ENCODE measurements at regions of chr3 and their contacts with region 1.

Region 1: GRCh38 chr3:73056014-73056844 is 5.2 kb upstream of the EBLN2 start:
- DNase-seq: no peak
- ATAC-seq: peak in 1 of 2 donors; percentile 70
- H3K4me3 ChIP-seq: no peak overlapping the region
- H3K27ac ChIP-seq: no peak overlapping the region
- H3K4me1 ChIP-seq: peaks cover 8 to 13% of the 10 kb centered on the region in 2 donors
- H3K27me3 ChIP-seq: no peaks in the 10 kb centered on the region
- CTCF ChIP-seq: peak in 4 of 5 experiments; percentile 27 to 67 (median 56)
- POLR2A ChIP-seq: no peak

Region 2: DNA sequence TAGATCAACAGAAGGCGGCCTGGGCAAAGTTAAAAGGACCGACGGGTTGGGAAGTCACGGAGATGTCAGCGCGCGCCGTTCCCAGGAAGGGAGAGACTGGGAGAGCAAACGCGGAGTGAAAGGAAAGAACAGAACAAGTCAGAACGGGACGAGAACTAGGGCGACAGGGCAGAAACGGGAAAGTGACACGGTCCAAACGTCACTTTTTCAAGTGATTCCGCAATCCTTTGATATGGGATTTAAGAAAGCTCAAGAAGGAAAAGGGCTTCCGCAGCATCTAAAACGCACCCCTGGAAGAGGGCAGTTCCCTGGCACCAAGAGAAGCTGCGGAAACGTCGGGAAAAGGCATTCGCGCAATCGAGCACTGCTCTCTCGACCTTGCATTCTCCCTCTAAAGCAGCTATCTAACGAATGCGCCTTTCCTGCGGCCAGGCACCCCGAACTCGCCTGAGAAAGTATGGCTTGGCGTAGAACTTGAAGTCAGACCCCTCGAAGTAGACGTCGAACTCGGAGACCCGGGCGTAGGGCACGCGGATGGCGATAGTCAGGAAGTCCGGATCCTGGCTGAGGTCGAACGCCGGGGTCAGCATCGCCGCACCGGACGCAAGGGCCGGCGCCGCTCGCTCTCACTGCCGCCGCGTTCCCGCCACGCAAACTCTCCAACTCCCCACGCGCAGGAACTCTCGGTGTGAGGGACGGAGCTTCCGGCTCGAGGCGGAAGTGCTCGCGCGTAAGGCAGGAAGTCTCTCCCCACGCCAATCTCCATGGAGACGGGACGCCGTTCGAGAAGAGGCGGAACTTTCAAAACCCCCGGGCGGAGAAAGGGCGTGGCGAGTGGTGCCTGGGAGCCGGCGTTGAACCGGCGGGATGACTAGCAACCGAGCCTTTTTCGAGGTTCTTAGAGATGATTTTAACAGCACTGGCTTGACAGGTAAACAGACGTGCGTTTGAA is 208.2 kb before region 1 on chr3 and contains the start of gene SHQ1:
- in situ Hi-C with region 1: loop called in 3 of 4 experiments (anchors 25 kb)
- intact Hi-C with region 1: loop called (anchors 5 kb)
- DNase-seq: peak; percentile 92 to 93
- ATAC-seq: peak; percentile 99
- H3K4me3 ChIP-seq: peak within 1 kb of the TSS; percentile 81 to 100 (median 91)
- H3K27ac ChIP-seq: peak within 1 kb of the TSS; percentile 79 to 91 (median 82)
- H3K4me1 ChIP-seq: peaks cover 23 to 35% of the 10 kb centered on the region in 2 donors
- H3K27me3 ChIP-seq: no peaks in the 10 kb centered on the region
- CTCF ChIP-seq: no peak
- POLR2A ChIP-seq: peak; percentile 55 to 61
- total RNA-seq, gene SHQ1: 9.2 to 15.0 (median 12.6) TPM

Region 3: DNA sequence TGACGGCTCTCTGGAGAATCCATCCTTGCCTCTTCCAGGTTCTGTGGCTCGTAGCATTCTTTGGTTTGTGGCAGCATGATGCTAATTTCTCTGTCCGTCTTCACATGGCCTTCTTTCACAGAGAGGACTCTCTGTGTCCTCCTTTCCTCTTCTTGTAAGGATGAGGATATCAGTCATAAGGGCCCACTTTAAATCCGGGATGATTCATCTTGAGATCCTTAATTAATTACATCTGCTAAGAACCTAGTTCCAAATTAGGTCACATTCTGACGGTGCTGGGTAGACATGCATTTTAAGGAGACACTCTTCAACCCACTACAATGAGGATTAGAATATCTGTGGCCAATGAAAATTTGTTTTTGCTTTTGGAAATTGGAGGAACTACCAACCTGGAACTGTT is 184.0 kb before region 1 on chr3:
- in situ Hi-C with region 1: loop called in 1 of 4 experiments (anchors 25 kb)
- intact Hi-C with region 1: no loop called
- DNase-seq: no peak
- ATAC-seq: no peak
- H3K4me3 ChIP-seq: no peak overlapping the region
- H3K27ac ChIP-seq: no peak overlapping the region
- H3K4me1 ChIP-seq: no peaks in the 10 kb centered on the region
- H3K27me3 ChIP-seq: no peaks in the 10 kb centered on the region
- CTCF ChIP-seq: no peak
- POLR2A ChIP-seq: no peak

Region 4: DNA sequence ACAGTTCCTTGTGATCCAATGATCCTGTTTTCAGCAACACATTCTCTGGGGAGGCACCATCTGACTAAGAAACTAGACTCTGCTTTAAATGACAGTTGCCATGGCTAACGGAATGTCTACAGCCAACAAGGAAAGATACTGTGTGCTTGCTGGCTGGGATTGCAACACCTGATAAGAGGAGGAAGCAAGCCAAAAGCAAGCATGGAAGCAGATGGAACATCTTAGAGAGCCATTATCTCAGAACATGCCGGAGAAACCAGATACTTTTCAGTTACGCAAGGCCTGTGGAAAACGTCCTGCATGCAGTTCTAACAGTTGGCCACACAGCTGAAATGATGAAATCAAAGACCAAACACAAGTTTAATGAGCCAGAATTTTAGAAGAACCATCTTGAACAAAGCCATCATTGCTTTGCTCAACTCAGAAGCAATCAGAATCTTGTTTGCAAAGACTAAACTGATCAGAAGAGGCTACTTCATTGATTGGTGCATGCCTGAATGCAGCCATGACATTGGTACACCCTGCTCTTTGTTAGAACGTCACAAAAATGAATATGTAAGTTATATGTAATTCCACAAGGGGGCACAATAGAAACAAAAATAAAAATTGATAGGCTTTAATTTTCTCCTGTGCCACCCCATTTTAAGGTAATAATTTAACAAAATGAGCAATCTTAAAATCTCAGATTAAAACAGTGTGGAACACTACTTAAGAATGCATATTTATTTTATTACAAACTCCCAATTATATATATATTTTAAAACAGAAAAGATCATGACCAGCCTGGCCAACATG is 117.6 kb before region 1 on chr3:
- in situ Hi-C with region 1: loop called (anchors 5 to 25 kb)
- intact Hi-C with region 1: loop called (anchors 2 kb)
- DNase-seq: peak; percentile 79
- ATAC-seq: peak; percentile 99 to 100
- H3K4me3 ChIP-seq: no peak overlapping the region
- H3K27ac ChIP-seq: peak overlapping the region; percentile 35 to 73 (median 54)
- H3K4me1 ChIP-seq: peaks cover 10 to 11% of the 10 kb centered on the region in 2 donors
- H3K27me3 ChIP-seq: no peaks in the 10 kb centered on the region
- CTCF ChIP-seq: peak; percentile 59 to 95 (median 71)
- POLR2A ChIP-seq: no peak

Region 5: DNA sequence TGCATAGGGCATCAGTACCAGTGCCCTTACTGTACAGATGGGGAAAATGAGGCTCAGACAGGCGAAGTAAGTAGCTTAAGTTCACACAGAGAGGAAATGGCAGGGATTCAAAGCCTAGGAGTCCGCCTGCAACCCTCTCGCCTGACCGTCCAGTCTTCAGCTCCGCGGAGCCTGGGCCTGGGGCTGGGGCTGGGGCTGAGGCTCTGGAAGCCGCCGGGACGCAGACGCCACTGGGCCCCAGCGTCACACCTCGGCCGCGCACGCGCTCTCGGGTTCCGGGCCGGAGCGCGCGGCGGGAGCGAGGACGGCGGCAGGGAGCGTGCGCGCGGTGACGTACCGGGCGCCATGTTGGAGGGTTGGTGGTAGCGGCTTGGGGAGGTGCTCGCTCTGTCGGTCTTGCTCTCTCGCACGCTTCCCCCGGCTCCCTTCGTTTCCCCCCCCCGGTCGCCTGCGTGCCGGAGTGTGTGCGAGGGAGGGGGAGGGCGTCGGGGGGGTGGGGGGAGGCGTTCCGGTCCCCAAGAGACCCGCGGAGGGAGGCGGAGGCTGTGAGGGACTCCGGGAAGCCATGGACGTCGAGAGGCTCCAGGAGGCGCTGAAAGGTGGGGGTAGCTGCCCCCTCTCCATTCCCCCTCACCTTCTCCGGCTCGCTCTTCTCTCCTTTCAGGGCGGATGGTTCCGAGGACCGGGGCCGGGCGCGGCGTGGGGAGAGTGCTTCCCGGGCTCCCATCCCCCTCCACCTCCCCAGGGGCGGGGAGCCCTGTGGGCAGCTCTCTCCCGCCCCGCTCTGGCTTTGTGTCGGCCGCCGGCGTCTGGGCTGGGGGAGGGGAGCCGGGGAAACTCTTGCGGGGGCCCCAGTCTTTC is 59.5 kb before region 1 on chr3 and contains the start of gene PPP4R2:
- in situ Hi-C with region 1: no loop called
- intact Hi-C with region 1: loop called (anchors 2 kb)
- DNase-seq: peak; percentile 71 to 81
- ATAC-seq: peak; percentile 90
- H3K4me3 ChIP-seq: peak within 1 kb of the TSS; percentile 91 to 94 (median 93)
- H3K27ac ChIP-seq: peak within 1 kb of the TSS; percentile 90 to 99 (median 98)
- H3K4me1 ChIP-seq: peaks cover 38 to 45% of the 10 kb centered on the region in 2 donors
- H3K27me3 ChIP-seq: no peaks in the 10 kb centered on the region
- CTCF ChIP-seq: no peak
- POLR2A ChIP-seq: peak; percentile 86 to 88
- total RNA-seq, gene PPP4R2: 31.0 to 60.5 (median 47.0) TPM

Region 6: DNA sequence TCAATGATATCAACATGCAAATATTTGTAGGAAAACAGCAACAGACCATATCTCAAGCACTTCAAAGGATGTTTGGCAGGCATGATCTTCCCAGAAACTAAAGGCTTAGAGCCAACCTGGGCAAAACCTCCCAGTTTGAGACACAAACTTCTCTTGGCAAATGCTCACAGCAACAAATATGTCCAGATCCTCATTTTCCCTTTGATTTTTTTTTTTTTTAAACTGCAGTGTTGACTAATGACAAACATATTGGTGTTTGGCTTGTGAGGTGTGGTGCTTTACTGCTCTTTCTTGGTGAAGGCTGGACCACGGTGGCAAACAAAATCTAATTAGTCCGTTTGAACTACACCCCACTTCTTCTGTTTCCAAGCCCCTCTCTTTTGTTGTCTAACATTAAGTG is 92.5 kb after region 1 on chr3:
- in situ Hi-C with region 1: no loop called
- intact Hi-C with region 1: no loop called
- DNase-seq: no peak
- ATAC-seq: no peak
- H3K4me3 ChIP-seq: no peak overlapping the region
- H3K27ac ChIP-seq: no peak overlapping the region
- H3K4me1 ChIP-seq: peaks cover 0 to 4% of the 10 kb centered on the region in 2 donors
- H3K27me3 ChIP-seq: no peaks in the 10 kb centered on the region
- CTCF ChIP-seq: no peak
- POLR2A ChIP-seq: no peak

Region 7: DNA sequence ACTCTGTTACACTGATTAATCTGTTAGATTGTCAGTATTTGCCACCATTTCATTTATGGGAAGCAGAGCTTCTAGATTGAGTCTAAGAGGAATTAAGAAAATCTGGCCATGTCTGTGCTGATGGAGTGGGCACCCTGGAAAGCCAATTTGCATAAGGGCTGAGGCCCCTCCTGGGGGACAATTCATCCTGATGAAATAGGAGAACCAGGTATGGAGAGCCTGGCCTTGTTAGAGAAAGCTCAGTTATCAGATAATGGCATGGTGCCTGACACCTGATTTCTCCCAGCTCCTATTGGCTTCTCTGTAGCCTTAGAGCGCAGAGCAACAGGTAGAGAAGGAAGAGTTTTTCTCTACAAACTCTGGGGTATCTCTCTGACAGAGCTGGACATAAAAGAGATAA is 119.5 kb after region 1 on chr3:
- in situ Hi-C with region 1: no loop called
- intact Hi-C with region 1: no loop called
- DNase-seq: no peak
- ATAC-seq: no peak
- H3K4me3 ChIP-seq: no peak overlapping the region
- H3K27ac ChIP-seq: no peak overlapping the region
- H3K4me1 ChIP-seq: no peaks in the 10 kb centered on the region
- H3K27me3 ChIP-seq: no peaks in the 10 kb centered on the region
- CTCF ChIP-seq: no peak
- POLR2A ChIP-seq: no peak